SK-N-SH (cell line): ENCODE measurements at regions of chr15 and their contacts with region 1.

Region 1: GRCh38 chr15:64731012-64731806 is 44.2 kb downstream of the RBPMS2 start:
- DNase-seq: peak; percentile 81
- H3K4me3 ChIP-seq: no peak overlapping the region
- H3K27ac ChIP-seq: no peak overlapping the region
- H3K4me1 ChIP-seq: peaks cover 0 to 7% of the 10 kb centered on the region in 2 experiments; a peak in 1 of 4 replicates
- H3K27me3 ChIP-seq: no peaks in the 10 kb centered on the region
- CTCF ChIP-seq: peak; percentile 88
- EP300 ChIP-seq: no peak
- RAD21 ChIP-seq: peak; percentile 97

Region 2: DNA sequence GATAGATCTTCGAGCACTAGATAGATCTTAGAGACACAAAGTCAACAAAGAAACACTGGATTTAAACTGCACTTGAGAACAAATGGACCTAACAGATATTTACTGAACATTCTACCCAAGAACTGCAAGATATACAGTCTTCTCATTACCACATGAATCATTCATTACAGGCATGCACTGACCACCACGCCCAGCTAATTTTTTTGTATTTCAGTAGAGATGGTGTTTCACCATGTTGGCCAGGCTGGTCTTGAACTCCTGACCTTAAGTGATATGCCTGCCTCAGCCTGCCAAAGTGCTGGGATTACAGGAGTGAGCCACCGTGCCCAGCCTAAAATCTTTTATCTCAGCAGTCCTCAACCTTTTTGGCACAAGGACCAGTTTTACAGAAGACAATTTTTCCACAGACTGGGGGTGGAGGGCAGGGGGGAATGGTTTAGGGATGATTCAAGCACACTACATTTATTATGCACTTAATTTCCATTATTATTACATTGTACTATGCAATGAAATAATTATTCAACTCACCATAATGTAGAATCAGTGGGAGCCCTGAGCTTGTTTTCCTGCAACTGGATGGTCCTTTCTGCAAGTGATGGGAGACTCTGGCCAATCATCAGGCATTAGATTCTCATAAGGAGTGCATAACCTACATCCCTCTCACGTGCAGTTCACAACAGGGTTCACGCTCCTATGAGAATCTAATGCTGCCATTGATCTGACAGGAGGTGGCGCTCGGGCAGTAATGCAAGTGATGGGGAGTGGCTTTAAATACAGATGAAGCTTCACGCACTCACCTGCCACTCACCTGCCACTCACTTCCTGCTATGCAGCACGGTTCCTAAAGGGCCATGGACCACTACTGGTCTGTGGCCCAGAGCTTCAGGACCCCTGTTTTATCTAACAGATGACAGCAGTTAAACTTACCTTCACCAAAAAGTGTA is 397.0 kb before region 1 on chr15:
- CTCF ChIA-PET with region 1: no interaction called
- POLR2A ChIA-PET with region 1: no interaction called
- DNase-seq: no peak
- H3K4me3 ChIP-seq: no peak overlapping the region
- H3K27ac ChIP-seq: no peak overlapping the region
- H3K4me1 ChIP-seq: no peaks in the 10 kb centered on the region
- H3K27me3 ChIP-seq: no peaks in the 10 kb centered on the region
- CTCF ChIP-seq: no peak
- EP300 ChIP-seq: no peak
- RAD21 ChIP-seq: no peak

Region 3: GRCh38 chr15:64426845-64427465 is 304.3 kb before region 1 on chr15:
- CTCF ChIA-PET with region 1: interaction called, 11 read pairs
- POLR2A ChIA-PET with region 1: no interaction called
- DNase-seq: no peak
- H3K4me3 ChIP-seq: no peak overlapping the region; a peak in 1 of 4 replicates
- H3K27ac ChIP-seq: peak overlapping the region in 1 of 2 experiments; percentile 33; a peak in 1 of 4 replicates
- H3K4me1 ChIP-seq: peaks cover 0 to 18% of the 10 kb centered on the region in 2 experiments; a peak in 1 of 4 replicates
- H3K27me3 ChIP-seq: no peaks in the 10 kb centered on the region
- CTCF ChIP-seq: peak; percentile 50
- EP300 ChIP-seq: no peak
- RAD21 ChIP-seq: peak; percentile 51

Region 4: DNA sequence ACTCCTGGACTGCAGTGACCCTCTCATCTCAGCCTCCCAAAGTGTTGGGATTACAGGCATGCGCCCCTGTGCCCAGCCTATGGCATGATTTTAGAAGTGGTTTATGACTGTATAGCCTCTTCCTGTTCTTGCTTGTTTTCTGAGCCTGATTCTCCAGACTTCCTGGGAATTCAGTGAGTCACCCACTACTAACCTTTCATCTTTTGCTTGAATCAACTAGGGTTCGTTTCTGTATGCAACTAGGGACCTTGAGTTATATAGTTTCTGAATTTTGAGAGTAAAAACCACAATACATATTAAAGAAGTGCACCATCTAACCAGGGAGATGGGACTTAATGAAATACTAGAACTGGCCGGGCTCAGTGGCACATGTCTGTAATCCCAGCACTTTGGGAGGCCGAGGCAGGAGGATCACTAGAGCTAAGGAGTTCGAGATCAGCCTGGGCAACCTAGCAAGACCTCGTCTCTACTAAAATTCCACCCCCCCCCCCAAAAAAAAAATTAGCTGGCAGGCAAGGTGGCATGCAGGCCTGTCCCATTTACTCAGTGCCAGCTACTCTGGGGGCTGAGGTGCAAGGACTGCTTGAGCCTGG is 194.9 kb before region 1 on chr15:
- CTCF ChIA-PET with region 1: no interaction called
- POLR2A ChIA-PET with region 1: no interaction called
- DNase-seq: no peak
- H3K4me3 ChIP-seq: no peak overlapping the region; a peak in 1 of 4 replicates
- H3K27ac ChIP-seq: peak overlapping the region in 1 of 2 experiments; percentile 85; a peak in 2 of 4 replicates
- H3K4me1 ChIP-seq: peaks cover 0 to 3% of the 10 kb centered on the region in 2 experiments; a peak in 2 of 4 replicates
- H3K27me3 ChIP-seq: no peaks in the 10 kb centered on the region
- CTCF ChIP-seq: no peak
- EP300 ChIP-seq: peak in 1 of 2 experiments; percentile 26; a peak in 1 of 4 replicates
- RAD21 ChIP-seq: no peak

Region 5: GRCh38 chr15:64634576-64635498 is 96.4 kb before region 1 on chr15:
- CTCF ChIA-PET with region 1: no interaction called
- POLR2A ChIA-PET with region 1: no interaction called
- DNase-seq: no peak
- H3K4me3 ChIP-seq: no peak overlapping the region
- H3K27ac ChIP-seq: peak overlapping the region; percentile 52 to 87; a peak in 3 of 4 replicates
- H3K4me1 ChIP-seq: peaks cover 12 to 26% of the 10 kb centered on the region in 2 experiments; a peak in 3 of 4 replicates
- H3K27me3 ChIP-seq: no peaks in the 10 kb centered on the region
- CTCF ChIP-seq: no peak
- EP300 ChIP-seq: no peak
- RAD21 ChIP-seq: no peak

Region 6: DNA sequence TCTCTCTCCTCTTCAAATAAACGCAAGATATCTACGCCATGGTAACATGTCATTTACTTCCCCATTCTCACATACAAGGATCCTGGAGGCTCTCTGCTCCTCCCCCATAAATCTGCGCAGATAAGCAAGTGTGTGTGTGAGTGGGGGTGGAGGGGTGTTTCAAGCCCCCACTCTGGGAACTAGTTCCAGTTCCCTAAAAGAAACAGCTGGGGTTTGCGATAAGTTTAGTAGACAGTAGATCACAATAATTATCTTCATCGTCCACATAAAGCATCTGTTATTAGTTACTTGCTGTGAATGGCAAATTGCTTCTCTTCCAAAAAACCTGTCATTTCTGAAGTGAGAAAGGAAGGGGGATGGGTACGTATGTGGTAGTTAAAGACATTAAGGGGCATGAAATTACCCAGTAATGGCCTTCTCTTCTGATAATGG is 35.6 kb before region 1 on chr15:
- CTCF ChIA-PET with region 1: interaction called, 513 read pairs
- POLR2A ChIA-PET with region 1: interaction called, 10 read pairs
- DNase-seq: peak; percentile 39
- H3K4me3 ChIP-seq: no peak overlapping the region
- H3K27ac ChIP-seq: peak overlapping the region in 1 of 2 experiments; percentile 92; a peak in 2 of 4 replicates
- H3K4me1 ChIP-seq: peaks cover 28 to 60% of the 10 kb centered on the region in 2 experiments
- H3K27me3 ChIP-seq: no peaks in the 10 kb centered on the region
- CTCF ChIP-seq: no peak
- EP300 ChIP-seq: peak in 1 of 2 experiments; percentile 72; a peak in 1 of 4 replicates
- RAD21 ChIP-seq: no peak

Region 7: GRCh38 chr15:64702816-64703646 is 28.2 kb before region 1 on chr15:
- CTCF ChIA-PET with region 1: interaction called, 513 read pairs
- POLR2A ChIA-PET with region 1: interaction called, 10 read pairs
- DNase-seq: peak; percentile 100
- H3K4me3 ChIP-seq: peak overlapping the region; percentile 70 to 75
- H3K27ac ChIP-seq: peak overlapping the region; percentile 63 to 93
- H3K4me1 ChIP-seq: peaks cover 30 to 41% of the 10 kb centered on the region in 2 experiments
- H3K27me3 ChIP-seq: no peaks in the 10 kb centered on the region
- CTCF ChIP-seq: no peak
- EP300 ChIP-seq: peak in 1 of 2 experiments; percentile 62; a peak in 1 of 4 replicates
- RAD21 ChIP-seq: no peak

Region 8: GRCh38 chr15:64710664-64711428 is 20.4 kb before region 1 on chr15:
- CTCF ChIA-PET with region 1: interaction called, 21 read pairs
- POLR2A ChIA-PET with region 1: no interaction called
- DNase-seq: no peak
- H3K4me3 ChIP-seq: no peak overlapping the region
- H3K27ac ChIP-seq: no peak overlapping the region
- H3K4me1 ChIP-seq: no peaks in the 10 kb centered on the region
- H3K27me3 ChIP-seq: no peaks in the 10 kb centered on the region
- CTCF ChIP-seq: no peak
- EP300 ChIP-seq: no peak
- RAD21 ChIP-seq: no peak

Region 9: GRCh38 chr15:64717735-64718495 is 13.3 kb before region 1 on chr15:
- CTCF ChIA-PET with region 1: interaction called, 29 read pairs
- POLR2A ChIA-PET with region 1: no interaction called
- DNase-seq: no peak
- H3K4me3 ChIP-seq: no peak overlapping the region
- H3K27ac ChIP-seq: no peak overlapping the region
- H3K4me1 ChIP-seq: no peaks in the 10 kb centered on the region; a peak in 1 of 4 replicates
- H3K27me3 ChIP-seq: no peaks in the 10 kb centered on the region
- CTCF ChIP-seq: no peak
- EP300 ChIP-seq: no peak
- RAD21 ChIP-seq: no peak

Region 10: GRCh38 chr15:64800476-64800875 is 69.3 kb after region 1 on chr15:
- CTCF ChIA-PET with region 1: interaction called, 286 read pairs
- POLR2A ChIA-PET with region 1: interaction called, 4 read pairs
- DNase-seq: no peak
- H3K4me3 ChIP-seq: no peak overlapping the region
- H3K27ac ChIP-seq: peak overlapping the region in 1 of 2 experiments; percentile 4; a peak in 1 of 4 replicates
- H3K4me1 ChIP-seq: peaks cover 0 to 10% of the 10 kb centered on the region in 2 experiments; a peak in 1 of 4 replicates
- H3K27me3 ChIP-seq: no peaks in the 10 kb centered on the region
- CTCF ChIP-seq: no peak
- EP300 ChIP-seq: no peak
- RAD21 ChIP-seq: no peak